Right ventricle myocardium superior (tissue), 1 donor: ENCODE measurements at regions of chr3 and their contacts with region 1.

Region 1: DNA sequence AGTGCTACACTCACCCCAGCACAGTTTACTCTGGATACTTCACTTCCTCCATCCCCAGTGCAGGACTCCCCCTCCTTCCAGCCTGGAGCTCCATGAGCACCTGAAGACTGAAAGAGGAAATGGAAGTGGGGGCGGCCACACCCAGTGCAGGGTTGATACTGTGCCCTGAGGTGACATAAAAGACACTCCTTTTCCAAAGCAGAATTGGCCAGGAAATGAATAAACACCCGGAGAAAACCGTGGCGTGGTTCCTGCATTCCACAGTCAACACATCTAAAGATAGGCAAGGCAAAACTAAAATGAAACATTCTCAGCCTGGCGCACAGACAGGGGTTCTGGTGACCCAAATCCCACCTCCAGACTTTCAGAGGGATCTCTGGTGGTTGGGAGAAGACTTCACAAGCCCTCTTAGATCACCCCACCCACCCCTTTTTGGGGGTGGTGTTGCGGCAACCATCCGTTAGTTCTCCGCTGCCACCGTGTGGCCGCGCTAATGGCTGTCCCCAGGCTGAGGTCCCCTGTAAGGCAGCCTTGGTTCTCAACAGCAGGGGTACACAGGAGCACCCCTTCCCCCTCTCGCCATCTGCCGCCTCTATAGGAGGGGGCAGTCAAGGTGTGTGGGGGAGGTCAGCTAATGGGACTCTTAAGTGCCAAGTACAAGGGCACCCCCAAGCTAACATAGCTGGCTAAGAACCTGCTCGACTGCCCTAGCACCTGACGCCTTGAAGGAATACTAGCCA is 2.5 kb upstream of the MST1R start:
- DNase-seq: peak; percentile 70
- ATAC-seq: peak; percentile 62

Region 2: GRCh38 chr3:49802719-49803464 is 103.3 kb before region 1 on chr3 and contains the start of gene INKA1:
- intact Hi-C with region 1: loop called (anchors 5 kb)
- DNase-seq: peak; percentile 95
- ATAC-seq: peak; percentile 89
- total RNA-seq, gene INKA1: 2.9 TPM

Region 3: GRCh38 chr3:49844464-49845183 is 61.5 kb before region 1 on chr3:
- intact Hi-C with region 1: loop called (anchors 5 kb)
- DNase-seq: no peak
- ATAC-seq: no peak

Region 4: DNA sequence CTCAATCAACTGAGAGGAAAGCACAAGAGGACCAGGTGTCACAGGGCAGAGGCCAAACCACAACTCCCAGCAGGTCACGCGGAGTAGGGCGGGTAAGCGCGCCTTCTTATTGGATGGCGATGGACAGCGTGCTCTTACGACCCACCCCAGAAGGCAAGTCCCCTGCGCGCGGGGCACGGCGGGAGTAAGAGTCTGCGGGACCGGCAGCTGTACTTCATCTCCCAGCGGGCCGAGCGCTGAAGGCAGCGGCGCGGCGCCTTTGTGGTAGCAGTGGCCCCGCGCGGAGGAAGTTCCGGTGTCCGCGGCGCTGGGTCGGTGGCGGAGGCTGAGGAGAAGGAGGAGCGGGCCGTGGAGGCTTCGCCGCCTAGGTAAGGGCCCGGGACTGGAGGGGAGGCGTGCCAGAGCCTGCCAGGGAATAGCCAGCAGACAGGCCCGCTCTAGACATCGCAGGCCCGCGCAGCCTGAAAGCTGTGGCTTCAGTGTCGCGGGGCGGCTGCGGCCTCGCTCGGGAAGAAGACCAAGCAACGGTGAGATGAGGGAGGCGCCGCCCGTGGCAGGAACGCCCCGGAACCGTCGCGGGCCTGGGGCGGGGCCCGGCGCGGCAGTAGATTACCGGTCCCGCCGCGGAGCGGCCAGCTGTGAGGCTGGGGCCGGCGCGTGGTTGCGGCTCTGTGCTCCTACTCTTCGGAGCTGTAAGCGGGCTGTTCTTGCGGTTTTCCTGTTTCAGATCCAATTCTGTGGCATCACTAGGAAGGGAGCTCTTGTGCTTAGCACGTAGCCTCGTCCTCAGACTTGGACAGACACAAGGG is 33.9 kb after region 1 on chr3 and contains the start of gene RBM6:
- intact Hi-C with region 1: no loop called
- DNase-seq: peak; percentile 99
- ATAC-seq: peak; percentile 99
- total RNA-seq, gene RBM6: 43.0 TPM